Activated naive CD4-positive, alpha-beta T cell treated with anti-CD3 and anti-CD28 coated beads for 36 hours (primary cell): ENCODE measurements at regions of chr6 and their contacts with region 1.

Region 1: DNA sequence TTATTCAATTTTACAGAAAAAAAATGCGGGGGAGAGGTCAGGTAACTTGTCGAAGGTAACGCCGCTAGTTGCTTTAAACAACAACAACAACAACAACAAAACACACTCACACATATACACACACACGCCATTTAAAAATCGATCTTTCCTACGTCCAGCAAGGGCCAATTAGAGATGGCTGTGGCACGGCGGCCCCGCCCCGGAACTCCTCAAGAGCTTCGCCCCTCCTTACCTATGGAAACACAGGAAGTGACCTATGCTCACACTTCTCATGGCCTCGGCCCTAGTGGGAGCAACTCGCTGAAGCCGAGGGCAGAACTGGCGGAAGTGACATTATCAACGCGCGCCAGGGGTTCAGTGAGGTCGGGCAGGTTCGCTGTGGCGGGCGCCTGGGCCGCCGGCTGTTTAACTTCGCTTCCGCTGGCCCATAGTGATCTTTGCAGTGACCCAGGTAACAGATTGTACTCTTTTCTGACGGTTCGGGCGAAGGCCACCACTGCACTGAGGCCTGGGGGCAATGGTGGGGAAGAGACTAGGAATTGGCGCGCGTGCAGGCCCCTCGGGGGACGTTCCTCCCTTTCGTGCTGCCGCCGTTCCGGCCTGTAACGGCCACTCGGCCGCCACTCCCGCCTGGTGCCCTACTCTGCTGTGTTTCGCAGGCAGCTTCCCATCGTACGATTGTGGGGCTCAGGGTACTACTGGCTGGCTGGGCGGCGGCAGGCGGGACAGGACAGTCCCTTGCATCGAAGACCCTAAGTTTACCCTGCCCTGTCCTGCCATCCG is at the start of gene TBP:
- DNase-seq: peak; percentile 98
- H3K4me3 Mint-ChIP-seq: no peak within 1 kb of the TSS
- H3K27ac Mint-ChIP-seq: no peak within 1 kb of the TSS
- H3K4me1 Mint-ChIP-seq: peaks cover 41% of the 10 kb centered on the region
- H3K27me3 Mint-ChIP-seq: no peaks in the 10 kb centered on the region
- total RNA-seq, gene TBP: 19.4 to 22.3 TPM

Region 2: DNA sequence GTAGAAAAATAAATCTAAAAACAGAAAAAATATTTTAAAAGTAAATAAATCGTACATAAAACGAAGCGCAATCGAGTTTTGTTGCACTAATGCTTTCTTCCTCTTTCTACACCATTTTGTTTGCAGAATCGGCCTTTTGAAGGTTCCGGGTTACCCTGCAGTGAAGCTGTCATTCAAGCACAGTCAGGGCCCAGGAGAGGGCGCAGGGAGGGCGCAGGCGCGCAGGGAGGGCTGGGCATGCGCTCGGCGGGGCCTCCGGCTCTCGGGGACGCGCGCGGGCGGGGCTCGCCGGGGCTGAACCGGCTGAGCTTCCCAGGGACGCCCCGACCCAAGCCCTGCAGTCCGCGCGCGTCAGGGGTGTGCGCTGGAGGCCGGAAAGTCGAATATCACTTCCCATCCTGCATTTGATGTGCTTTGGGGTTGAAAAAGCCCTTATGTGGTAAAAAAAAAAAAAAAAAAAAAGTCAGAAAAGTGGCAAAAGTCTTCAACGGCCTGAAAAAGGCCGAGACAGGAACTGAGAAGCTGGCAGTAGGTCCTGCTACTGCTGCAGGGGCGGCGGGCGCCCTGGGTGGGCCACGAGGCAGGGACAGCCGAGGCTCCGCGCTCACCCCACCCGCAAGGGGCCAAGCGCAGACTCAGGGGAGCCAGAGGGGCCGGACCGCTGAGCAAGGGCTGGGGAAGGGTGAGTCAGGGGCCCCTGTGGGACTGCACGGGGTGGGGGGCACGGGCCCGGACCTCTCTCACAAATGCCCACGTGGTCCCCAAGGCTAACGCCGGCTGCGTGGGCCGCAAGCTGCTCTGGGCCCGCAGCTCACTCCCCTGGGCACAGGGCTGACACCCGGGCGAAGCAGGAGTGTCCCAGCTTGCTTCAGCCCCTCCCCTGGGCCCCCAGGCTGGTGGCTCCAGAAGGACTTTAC is 1341.0 kb before region 1 on chr6:
- CTCF ChIA-PET with region 1: no interaction called
- intact Hi-C with region 1: loop called (anchors 5 kb)
- DNase-seq: peak; percentile 93
- H3K4me3 Mint-ChIP-seq: peak overlapping the region; percentile 61
- H3K27ac Mint-ChIP-seq: peak overlapping the region; percentile 79
- H3K4me1 Mint-ChIP-seq: peaks cover 8% of the 10 kb centered on the region
- H3K27me3 Mint-ChIP-seq: no peaks in the 10 kb centered on the region

Region 3: DNA sequence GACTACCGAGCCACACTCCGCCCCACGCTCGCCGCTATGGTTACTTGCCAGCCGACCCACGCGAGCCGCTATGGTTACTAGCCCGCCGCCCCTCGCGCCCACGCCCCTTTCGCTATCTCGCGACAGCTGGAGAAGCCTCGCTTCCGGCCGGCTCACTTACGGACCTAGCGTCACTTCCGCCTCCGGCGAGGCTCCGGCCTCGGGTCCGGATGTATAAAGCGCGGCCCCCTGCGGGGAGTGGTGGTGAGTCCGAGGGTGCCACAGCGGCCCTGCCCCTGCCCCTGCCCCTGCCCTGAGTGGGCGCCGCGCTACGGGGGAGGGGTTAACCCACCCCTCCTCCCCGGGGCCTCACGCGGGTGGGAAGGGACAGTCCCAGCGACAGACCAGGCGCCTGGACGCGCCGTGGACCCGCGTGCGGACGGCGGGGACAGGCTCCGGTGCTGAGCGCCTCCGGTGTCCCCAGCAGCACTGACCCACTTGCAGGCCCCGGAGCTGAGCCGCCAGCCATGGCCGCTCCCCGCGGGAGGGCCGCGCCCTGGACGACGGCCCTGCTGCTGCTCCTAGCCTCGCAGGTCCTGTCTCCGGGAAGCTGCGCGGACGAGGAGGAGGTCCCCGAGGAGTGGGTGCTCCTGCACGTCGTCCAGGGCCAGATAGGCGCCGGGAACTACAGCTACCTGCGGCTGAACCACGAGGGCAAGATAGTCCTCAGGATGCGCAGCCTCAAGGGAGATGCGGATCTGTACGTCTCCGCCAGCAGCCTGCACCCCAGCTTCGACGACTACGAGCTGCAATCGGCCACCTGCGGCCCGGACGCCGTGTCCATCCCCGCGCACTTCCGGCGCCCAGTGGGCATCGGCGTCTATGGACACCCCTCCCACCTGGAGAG is 852.0 kb before region 1 on chr6 and contains the starts of genes C6orf120 and WDR27:
- CTCF ChIA-PET with region 1: no interaction called
- intact Hi-C with region 1: loop called (anchors 1 kb)
- DNase-seq: peak; percentile 97
- H3K4me3 Mint-ChIP-seq: peak within 1 kb of the TSS; percentile 86
- H3K27ac Mint-ChIP-seq: peak within 1 kb of the TSS; percentile 91
- H3K4me1 Mint-ChIP-seq: peaks cover 41% of the 10 kb centered on the region
- H3K27me3 Mint-ChIP-seq: no peaks in the 10 kb centered on the region
- total RNA-seq, gene C6orf120: 10.7 to 11.7 TPM
- total RNA-seq, gene WDR27: 37.9 to 38.3 TPM

Region 4: GRCh38 chr6:169723200-169723909 is 830.8 kb before region 1 on chr6:
- CTCF ChIA-PET with region 1: no interaction called
- intact Hi-C with region 1: loop called (anchors 1 kb)
- DNase-seq: peak; percentile 62
- H3K4me3 Mint-ChIP-seq: peak overlapping the region; percentile 84
- H3K27ac Mint-ChIP-seq: peak overlapping the region; percentile 94
- H3K4me1 Mint-ChIP-seq: peaks cover 43% of the 10 kb centered on the region
- H3K27me3 Mint-ChIP-seq: no peaks in the 10 kb centered on the region

Region 5: DNA sequence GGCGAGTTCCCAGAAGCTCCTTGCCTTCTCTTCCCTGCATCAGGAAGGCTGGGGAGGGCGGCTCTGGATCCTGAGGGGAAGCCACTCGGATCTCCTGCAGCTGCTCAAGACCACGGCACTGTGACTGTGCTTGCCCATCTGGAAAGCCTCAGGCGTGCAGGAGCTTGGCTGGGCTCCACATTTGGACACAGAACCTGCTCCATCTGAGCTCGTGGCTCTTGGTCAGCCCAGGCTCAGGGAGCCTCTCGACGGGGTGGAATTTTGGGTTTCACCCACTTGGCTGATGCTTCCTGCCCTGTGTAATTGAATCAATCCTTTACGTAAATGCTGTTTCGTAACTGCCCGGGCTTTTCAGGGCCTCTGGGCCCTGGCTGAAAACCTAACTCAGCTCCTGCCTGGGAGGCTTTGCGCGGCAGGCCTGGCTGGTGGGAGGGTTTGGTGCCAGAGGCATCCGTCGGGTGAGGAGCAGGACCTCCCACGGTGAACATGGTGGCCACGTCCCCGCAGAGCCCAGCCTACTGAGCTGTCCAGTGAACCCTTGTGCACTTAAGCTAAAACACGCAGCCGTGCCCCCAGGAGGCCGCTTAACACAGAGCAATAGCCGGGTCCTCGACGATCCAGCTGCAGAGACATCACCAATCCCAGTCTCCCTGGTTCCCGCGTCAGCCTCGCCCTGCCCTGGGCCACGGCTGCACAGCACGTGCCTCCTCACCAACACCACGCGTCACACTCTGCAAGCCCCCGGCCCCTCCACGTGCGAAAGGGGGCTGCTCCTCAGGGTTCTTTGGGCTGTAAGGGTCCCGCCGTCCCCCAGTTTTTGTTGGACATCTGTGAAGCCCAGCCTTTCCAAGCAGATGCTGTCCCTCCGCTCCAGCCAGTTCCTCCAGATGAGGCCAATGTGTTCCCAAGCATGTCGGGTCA is 504.3 kb before region 1 on chr6:
- CTCF ChIA-PET with region 1: no interaction called
- intact Hi-C with region 1: no loop called
- DNase-seq: no peak
- H3K4me3 Mint-ChIP-seq: no peak overlapping the region
- H3K27ac Mint-ChIP-seq: no peak overlapping the region
- H3K4me1 Mint-ChIP-seq: no peaks in the 10 kb centered on the region
- H3K27me3 Mint-ChIP-seq: no peaks in the 10 kb centered on the region

Region 6: DNA sequence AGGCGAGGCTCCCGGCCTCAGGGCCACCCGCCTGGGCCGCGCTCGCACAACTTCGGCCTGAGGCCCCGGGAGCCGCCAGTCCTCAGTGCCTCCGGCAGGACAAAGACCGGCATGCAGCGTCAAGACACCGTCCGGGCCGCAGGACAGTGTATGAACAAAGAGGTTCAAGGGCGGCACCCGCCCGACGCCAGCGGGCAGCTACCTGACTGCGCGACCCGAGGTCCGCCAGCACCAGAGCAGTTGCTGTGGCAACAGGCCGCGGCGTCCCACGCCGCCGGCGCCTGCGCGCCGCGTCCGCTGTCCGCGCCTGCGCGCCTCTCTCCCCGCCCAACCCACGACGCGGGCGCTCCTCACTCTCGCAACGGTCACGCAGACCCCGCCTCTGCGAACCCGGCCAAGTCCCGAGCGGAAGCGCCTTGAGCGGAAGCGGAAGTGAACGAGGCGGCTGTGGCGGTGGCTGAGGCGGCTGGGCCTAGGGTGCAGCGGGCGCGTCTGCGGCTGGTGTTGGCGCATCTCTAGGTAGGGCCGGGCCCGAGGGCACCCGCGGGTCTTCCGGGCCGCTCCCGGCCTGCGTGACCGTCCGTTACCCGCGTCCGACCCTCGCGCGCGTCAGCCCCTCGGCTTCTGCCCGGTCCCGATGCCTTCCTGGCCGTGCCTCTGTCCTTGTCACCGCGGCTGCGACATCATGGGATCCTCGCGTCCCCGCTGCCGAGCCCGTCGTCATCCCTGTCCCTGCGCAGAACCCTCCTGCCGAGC is 247.7 kb before region 1 on chr6 and contains the start of gene FAM120B:
- CTCF ChIA-PET with region 1: no interaction called
- intact Hi-C with region 1: loop called (anchors 1 kb)
- DNase-seq: peak; percentile 92
- H3K4me3 Mint-ChIP-seq: peak within 1 kb of the TSS; percentile 86
- H3K27ac Mint-ChIP-seq: peak within 1 kb of the TSS; percentile 81
- H3K4me1 Mint-ChIP-seq: peaks cover 36% of the 10 kb centered on the region
- H3K27me3 Mint-ChIP-seq: peaks cover 4% of the 10 kb centered on the region
- total RNA-seq, gene FAM120B: 15.5 to 16.1 TPM

Region 7: GRCh38 chr6:170584181-170584953 is 30.2 kb after region 1 on chr6 and contains the start of gene PDCD2:
- CTCF ChIA-PET with region 1: interaction called, 3 read pairs
- intact Hi-C with region 1: loop called (anchors 1 kb)
- DNase-seq: peak; percentile 94
- H3K4me3 Mint-ChIP-seq: peak within 1 kb of the TSS; percentile 99
- H3K27ac Mint-ChIP-seq: peak within 1 kb of the TSS; percentile 91
- H3K4me1 Mint-ChIP-seq: peaks cover 34% of the 10 kb centered on the region
- H3K27me3 Mint-ChIP-seq: no peaks in the 10 kb centered on the region
- total RNA-seq, gene PDCD2: 106 to 109 TPM